Lower leg skin (tissue), 4 donors: ENCODE measurements at regions of chr3 and their contacts with region 1.

Region 1: DNA sequence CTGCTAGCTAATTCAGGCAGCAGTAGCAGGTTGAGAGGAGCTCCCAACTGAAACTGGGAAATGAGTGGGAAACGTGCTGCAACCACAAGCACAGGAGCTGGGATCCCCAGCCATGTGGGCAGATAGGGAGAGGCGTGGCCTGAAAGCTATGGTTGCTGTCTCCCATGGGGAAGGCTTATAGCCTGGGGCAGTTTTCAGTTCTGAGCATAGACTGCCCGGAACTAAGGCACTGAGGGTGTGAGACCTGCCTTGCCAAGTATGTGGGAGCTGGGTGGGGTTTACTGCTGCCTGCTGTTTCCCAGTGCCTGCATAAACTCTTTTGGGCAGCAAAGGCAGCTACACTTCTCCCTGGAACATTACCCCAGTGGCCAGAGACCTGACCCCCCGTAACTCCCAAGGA is 229.5 kb downstream of the TUSC7 start:
- DNase-seq: no peak
- H3K4me3 ChIP-seq: no peak overlapping the region
- CTCF ChIP-seq: no peak
- POLR2A ChIP-seq: no peak

Region 2: GRCh38 chr3:116863822-116864589 is 75.1 kb before region 1 on chr3:
- intact Hi-C with region 1: no loop called
- DNase-seq: no peak
- H3K4me3 ChIP-seq: no peak overlapping the region
- CTCF ChIP-seq: no peak
- POLR2A ChIP-seq: no peak

Region 3: DNA sequence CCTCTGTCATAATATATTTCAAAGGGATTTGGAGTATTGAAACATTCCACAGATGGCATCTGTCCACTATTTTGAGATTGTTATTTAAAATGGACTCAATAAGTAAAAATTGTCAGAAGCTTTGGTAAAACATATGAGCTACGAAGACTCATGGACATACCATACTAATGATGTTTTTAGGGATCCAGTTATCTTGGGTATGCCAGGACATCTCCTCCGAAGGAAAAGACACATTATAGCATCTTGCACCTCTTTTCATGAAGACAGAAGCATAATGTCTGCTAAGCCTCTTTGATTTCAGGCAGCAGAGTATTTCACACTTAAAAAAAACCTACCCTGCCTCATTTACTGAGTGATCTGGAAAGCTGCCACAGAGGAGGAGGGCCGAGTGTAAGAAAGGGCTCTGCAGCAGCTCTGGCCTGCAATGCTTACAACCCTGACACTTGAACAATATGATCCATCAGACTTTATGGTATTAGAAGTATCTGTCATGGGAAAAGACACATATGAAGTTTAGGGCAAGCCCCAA is 55.3 kb after region 1 on chr3:
- intact Hi-C with region 1: loop called (anchors 2 kb)
- DNase-seq: no peak
- H3K4me3 ChIP-seq: no peak overlapping the region
- CTCF ChIP-seq: no peak
- POLR2A ChIP-seq: no peak